IMR-90 (cell line): ENCODE measurements at regions of chr11 and their contacts with region 1.

Region 1: GRCh38 chr11:46369458-46370152 is 11.9 kb upstream of the MDK start:
- DNase-seq: peak; percentile 77
- ATAC-seq: peak; percentile 90
- H3K4me3 ChIP-seq: no peak overlapping the region
- H3K27ac ChIP-seq: no peak overlapping the region
- H3K4me1 ChIP-seq: peaks cover 10% of the 10 kb centered on the region; the same call in 1 of the 2 replicates
- H3K27me3 ChIP-seq: no peaks in the 10 kb centered on the region
- CTCF ChIP-seq: peak; percentile 87
- POLR2A ChIP-seq: no peak
- RAD21 ChIP-seq: peak; percentile 67

Region 2: DNA sequence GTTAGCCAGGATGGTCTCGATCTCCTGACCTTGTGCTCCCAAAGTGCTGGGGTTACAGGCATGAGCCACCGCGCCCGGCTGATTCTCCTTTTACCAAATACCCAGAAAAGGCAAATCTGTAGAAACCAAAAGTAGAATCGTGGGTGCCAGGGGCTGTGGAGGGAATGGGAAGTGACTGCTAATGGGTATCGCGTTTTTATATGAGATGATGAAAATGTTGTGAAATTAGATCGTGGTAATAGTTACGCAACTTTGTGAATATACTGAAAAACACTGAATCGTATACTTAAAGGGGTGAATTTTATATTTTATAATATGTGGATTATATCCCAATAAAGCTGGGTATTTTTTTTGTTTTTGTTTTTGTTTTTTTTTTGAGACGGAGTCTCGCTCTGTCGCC is 140.4 kb before region 1 on chr11:
- CTCF ChIA-PET with region 1: no interaction called
- POLR2A ChIA-PET with region 1: no interaction called
- dilution Hi-C with region 1: no loop called
- in situ Hi-C with region 1: no loop called
- intact Hi-C with region 1: no loop called
- DNase-seq: no peak
- ATAC-seq: no peak
- H3K4me3 ChIP-seq: no peak overlapping the region
- H3K27ac ChIP-seq: no peak overlapping the region
- H3K4me1 ChIP-seq: no peaks in the 10 kb centered on the region
- H3K27me3 ChIP-seq: 0 out of 2 replicates have a peak, but pooled peaks cover 1% of the 10 kb centered on the region
- CTCF ChIP-seq: no peak
- POLR2A ChIP-seq: no peak
- RAD21 ChIP-seq: no peak

Region 3: DNA sequence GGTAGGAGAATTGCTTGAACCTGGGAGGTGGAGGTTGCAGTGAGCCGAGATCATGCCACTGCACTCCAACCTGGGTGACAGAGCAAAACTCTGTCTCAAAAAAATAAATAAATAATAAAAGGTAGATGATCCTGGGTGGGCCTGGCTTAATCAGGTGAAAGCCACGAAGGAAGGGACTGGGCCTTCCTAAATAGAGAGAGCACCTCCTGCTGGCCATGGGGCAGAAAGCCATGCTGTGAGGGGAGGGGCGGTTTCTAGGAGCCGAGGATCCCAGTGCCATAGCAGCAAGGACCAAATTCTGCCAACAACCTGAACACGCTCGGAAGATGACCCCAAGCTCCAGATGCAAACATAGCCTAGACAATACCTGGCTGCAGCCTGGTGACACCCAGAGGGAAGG is 46.8 kb before region 1 on chr11:
- CTCF ChIA-PET with region 1: no interaction called
- POLR2A ChIA-PET with region 1: no interaction called
- dilution Hi-C with region 1: no loop called
- in situ Hi-C with region 1: no loop called
- intact Hi-C with region 1: no loop called
- DNase-seq: peak; percentile 35
- ATAC-seq: no peak
- H3K4me3 ChIP-seq: no peak overlapping the region
- H3K27ac ChIP-seq: no peak overlapping the region
- H3K4me1 ChIP-seq: no peaks in the 10 kb centered on the region
- H3K27me3 ChIP-seq: no peaks in the 10 kb centered on the region
- CTCF ChIP-seq: peak; percentile 50
- POLR2A ChIP-seq: no peak
- RAD21 ChIP-seq: peak; percentile 37; the same call in 1 of the 2 replicates

Region 4: DNA sequence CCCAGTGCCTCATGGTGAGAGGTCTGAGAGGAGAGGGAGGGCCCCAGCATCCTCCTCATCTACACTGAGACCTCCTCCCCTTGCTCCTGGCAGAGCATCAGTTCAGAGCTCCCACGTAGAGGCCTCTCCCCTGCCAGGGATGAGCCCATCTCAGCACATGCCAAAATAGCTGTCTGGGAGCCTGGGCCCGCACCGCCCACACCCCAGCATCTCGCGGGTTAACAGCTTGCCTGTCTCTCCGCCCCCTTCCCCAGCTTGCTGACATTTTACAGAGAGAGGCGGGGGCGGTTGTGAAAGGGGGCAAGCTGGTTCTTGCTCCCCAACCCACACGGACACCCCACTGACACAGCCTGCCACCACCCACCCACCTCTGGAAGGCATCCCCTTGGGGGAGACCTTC is 15.9 kb before region 1 on chr11:
- CTCF ChIA-PET with region 1: interaction called, 3 read pairs
- POLR2A ChIA-PET with region 1: no interaction called
- dilution Hi-C with region 1: no loop called
- in situ Hi-C with region 1: no loop called
- intact Hi-C with region 1: loop called (anchors 1 kb)
- DNase-seq: peak; percentile 50
- ATAC-seq: peak; percentile 25
- H3K4me3 ChIP-seq: no peak overlapping the region
- H3K27ac ChIP-seq: no peak overlapping the region
- H3K4me1 ChIP-seq: peaks cover 14% of the 10 kb centered on the region
- H3K27me3 ChIP-seq: no peaks in the 10 kb centered on the region
- CTCF ChIP-seq: no peak
- POLR2A ChIP-seq: no peak
- RAD21 ChIP-seq: no peak

Region 5: DNA sequence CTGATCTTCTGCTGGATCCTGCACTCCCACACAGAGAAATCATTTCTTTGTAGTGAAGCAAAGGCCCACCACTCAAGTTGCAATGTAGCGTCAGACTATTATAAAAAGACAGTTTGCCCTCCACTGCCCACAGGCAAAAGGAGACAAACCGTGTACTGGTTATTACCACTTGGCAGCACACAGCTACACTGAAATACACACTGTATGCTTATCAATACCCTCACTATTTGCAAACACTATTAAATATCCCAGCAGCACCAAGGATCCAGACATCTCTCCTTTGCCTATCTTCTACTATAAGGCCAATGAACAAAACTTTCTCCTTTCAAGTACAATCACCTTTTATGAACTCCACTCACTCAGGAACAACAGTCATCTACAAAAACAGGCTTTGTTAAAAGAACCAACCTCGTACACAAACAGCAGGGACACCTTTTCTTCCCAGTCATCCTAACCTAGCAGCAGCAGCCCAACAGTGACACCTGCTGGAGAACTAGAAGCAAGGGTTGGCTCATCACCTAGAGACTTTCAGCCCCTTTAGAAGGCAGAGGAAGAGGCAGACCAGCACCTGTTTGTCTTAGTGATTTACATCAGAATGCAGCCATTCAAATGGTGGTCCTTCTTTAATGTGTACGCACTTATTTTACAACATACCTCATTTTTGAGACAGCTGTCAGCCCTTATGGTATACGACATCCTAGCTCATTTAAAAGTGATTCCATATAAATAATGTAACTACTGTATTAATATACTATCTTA is 168.1 kb after region 1 on chr11:
- CTCF ChIA-PET with region 1: no interaction called
- POLR2A ChIA-PET with region 1: no interaction called
- dilution Hi-C with region 1: no loop called
- in situ Hi-C with region 1: no loop called
- intact Hi-C with region 1: loop called (anchors 1 kb)
- DNase-seq: peak; percentile 78
- ATAC-seq: peak; percentile 88
- H3K4me3 ChIP-seq: no peak overlapping the region
- H3K27ac ChIP-seq: no peak overlapping the region
- H3K4me1 ChIP-seq: no peaks in the 10 kb centered on the region
- H3K27me3 ChIP-seq: no peaks in the 10 kb centered on the region
- CTCF ChIP-seq: peak; percentile 92
- POLR2A ChIP-seq: no peak
- RAD21 ChIP-seq: peak; percentile 94